ENCODE measurements at regions of chr3 and their contacts with region 1.

Region 1: DNA sequence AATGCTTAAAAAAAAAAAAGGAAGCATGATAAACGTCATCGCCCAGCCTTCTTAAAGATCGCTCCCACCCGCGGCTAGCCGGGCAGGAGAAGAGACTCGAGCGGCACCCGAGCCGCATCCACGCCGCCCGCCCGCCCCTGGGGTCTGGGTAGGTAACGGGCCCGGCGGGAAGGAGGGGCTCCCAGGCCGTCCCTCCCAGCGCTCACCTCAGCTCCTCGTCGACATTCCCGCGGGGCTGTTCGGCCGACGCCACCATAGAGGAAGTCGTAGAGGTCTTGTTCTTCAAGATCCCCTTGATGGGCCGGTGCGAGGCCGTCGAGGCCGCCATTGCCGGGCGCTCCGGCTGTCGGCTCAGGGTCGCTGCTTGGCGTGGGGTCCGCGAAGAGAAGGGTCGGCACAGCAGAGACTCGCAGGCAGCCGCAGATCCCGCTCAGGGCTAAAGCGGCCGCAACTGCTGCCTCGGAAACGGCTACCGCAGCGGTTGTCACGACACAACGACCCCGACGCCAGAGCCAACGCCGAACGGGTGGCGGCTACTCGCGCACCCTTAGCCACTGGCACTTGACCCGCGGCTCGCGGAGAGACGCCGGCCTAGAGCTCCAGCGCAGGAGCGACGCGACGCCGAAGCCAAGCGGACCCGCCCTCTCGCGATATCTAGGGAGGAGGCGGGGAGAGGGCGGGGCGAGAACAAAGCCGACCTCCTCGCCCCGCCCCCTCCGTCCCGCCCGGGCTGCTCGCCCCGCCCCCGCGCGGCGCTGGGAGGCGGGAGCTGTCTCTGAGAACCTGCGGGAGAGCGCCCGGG is at the start of gene PPP1R2:
- DNase-seq: peak; percentile 82 to 98 (median 93)
- ATAC-seq: peak; percentile 66 to 74
- H3K4me3 Mint-ChIP-seq: peak within 1 kb of the TSS; percentile 89 to 96 (median 94)
- H3K27ac Mint-ChIP-seq: peak within 1 kb of the TSS; percentile 95 to 100 (median 96)
- H3K4me1 Mint-ChIP-seq: peaks cover 46 to 78% (median 71%) of the 10 kb centered on the region in 4 donors
- H3K27me3 Mint-ChIP-seq: no peaks in the 10 kb centered on the region
- polyA plus RNA-seq, gene PPP1R2: 244 to 265 (median 245) TPM

Region 2: GRCh38 chr3:195442573-195443390 is 100.1 kb before region 1 on chr3 and contains the start of gene ACAP2:
- POLR2A ChIA-PET with region 1: interaction called, 14 read pairs
- DNase-seq: peak; percentile 95 to 99 (median 98)
- ATAC-seq: peak; percentile 90 to 91
- H3K4me3 Mint-ChIP-seq: peak within 1 kb of the TSS; percentile 91 to 99 (median 94)
- H3K27ac Mint-ChIP-seq: peak within 1 kb of the TSS; percentile 51 to 95 (median 90)
- H3K4me1 Mint-ChIP-seq: peaks cover 20 to 61% (median 53%) of the 10 kb centered on the region in 4 donors
- H3K27me3 Mint-ChIP-seq: no peaks in the 10 kb centered on the region
- polyA plus RNA-seq, gene ACAP2: 36.7 to 49.6 (median 49.5) TPM

Region 3: DNA sequence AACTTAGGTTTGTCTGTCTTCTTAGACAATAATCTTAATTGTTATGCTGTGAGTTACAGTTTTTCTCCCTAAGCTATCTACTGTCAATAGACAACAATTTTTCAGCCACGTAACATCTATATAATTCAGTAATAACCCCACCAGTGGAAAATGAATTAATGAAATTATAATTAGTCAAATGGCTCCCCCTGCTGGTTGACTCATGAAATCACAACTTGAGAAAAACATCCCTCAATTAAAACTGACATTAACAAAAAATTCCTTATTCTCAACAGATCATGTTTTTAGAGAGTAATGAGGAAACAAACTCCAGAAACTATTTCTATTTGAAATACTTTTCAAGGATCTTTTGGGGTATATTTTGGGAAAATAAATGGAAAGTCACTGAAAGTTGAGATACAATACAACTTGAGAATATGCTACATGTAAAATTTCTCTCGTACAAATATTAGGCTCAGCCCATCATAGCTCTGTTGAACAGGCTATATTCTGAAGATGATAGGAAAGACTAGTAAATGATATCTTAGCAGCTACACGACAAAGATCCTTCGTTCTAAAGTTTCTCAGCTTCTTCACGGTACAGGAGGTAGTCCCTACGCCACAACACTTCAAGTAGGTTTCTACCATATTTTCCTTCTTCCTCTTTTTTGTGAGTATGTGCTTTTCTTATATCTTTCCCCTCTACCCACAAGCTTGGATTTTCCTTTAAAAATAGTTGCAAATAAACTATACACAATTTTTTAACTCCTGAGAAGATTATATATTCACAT is 20.5 kb before region 1 on chr3:
- POLR2A ChIA-PET with region 1: interaction called, 16 read pairs
- DNase-seq: peak in 4 of 10 donors; percentile 28 to 59 (median 58)
- ATAC-seq: no peak
- H3K4me3 Mint-ChIP-seq: peak overlapping the region in 5 of 10 donors; percentile 5 to 11 (median 7)
- H3K27ac Mint-ChIP-seq: peak overlapping the region; percentile 32 to 84 (median 66)
- H3K4me1 Mint-ChIP-seq: peaks cover 13 to 56% (median 46%) of the 10 kb centered on the region in 4 donors
- H3K27me3 Mint-ChIP-seq: no peaks in the 10 kb centered on the region

Region 4: DNA sequence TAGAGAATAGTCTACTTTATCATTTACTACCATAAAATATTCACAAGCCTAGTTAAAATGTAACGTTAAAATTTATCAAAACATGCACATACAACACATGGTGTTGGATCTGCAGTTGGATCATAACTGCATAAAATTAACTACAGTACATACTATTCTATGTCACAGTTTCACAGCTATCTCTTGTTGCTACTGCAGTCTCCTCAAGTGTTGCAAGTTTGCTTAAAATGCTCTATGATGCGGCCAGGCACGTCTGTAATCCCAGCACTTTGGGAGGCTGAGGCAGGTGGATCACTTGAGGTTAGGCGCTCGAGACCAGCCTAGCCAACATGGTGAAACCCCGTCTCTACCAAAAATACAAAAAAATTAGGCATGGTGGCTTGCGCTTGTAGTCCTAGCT is 10.1 kb before region 1 on chr3:
- POLR2A ChIA-PET with region 1: interaction called, 21 read pairs
- DNase-seq: no peak
- ATAC-seq: peak in 1 of 2 donors; percentile 37
- H3K4me3 Mint-ChIP-seq: peak overlapping the region; percentile 11 to 78 (median 58)
- H3K27ac Mint-ChIP-seq: peak overlapping the region in 9 of 10 donors; percentile 3 to 72 (median 59)
- H3K4me1 Mint-ChIP-seq: peaks cover 29 to 89% (median 83%) of the 10 kb centered on the region in 4 donors
- H3K27me3 Mint-ChIP-seq: no peaks in the 10 kb centered on the region

Region 5: GRCh38 chr3:195556387-195556786 is 13.5 kb after region 1 on chr3:
- POLR2A ChIA-PET with region 1: interaction called, 119 read pairs
- DNase-seq: peak in 4 of 10 donors; percentile 33 to 49 (median 45)
- ATAC-seq: peak; percentile 64 to 85
- H3K4me3 Mint-ChIP-seq: peak overlapping the region in 6 of 10 donors; percentile 24 to 67 (median 38)
- H3K27ac Mint-ChIP-seq: peak overlapping the region; percentile 44 to 91 (median 70)
- H3K4me1 Mint-ChIP-seq: peaks cover 22 to 60% (median 53%) of the 10 kb centered on the region in 4 donors
- H3K27me3 Mint-ChIP-seq: no peaks in the 10 kb centered on the region

Measured in naive thymus-derived CD8-positive, alpha-beta T cell (primary cell).